B cell (primary cell): ENCODE measurements at regions of chr15 and their contacts with region 1.

Region 1: DNA sequence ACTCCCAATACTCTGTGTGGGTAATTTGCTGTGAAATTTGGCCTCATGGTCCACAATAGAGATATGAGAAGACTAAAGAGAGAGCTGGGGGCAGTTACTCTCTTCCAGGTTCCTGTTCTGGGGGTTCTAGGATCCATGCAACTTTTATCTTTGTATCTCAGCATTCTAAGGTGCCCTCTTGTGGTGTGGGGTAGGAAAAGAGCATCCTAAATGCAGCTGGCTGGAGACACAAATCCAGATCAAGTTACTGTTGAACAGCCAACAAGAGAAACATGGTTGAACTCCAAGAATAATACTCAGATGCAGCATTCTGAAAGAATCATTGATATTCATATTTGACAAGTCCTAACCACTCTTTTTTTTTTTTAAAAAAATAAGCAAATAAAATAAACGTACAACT is 238.2 kb downstream of the GREM1 start:
- DNase-seq: peak; percentile 52
- ATAC-seq: peak; percentile 28
- H3K4me3 ChIP-seq: no peak overlapping the region
- H3K4me3 Mint-ChIP-seq: no peak overlapping the region
- H3K27ac ChIP-seq: no peak overlapping the region
- H3K27ac Mint-ChIP-seq: no peak overlapping the region
- H3K4me1 ChIP-seq: no peaks in the 10 kb centered on the region
- H3K4me1 Mint-ChIP-seq: peaks cover 2% of the 10 kb centered on the region
- H3K27me3 ChIP-seq: peaks cover 0 to 3% (median 0%) of the 10 kb centered on the region in 4 experiments
- H3K27me3 Mint-ChIP-seq: peaks cover 24% of the 10 kb centered on the region
- CTCF ChIP-seq: peak; percentile 62

Region 2: GRCh38 chr15:32657198-32657883 is 298.7 kb before region 1 on chr15:
- CTCF ChIA-PET with region 1: interaction called, 67 read pairs
- POLR2A ChIA-PET with region 1: no interaction called
- intact Hi-C with region 1: loop called (anchors 1 kb)
- DNase-seq: no peak
- ATAC-seq: no peak
- H3K4me3 ChIP-seq: no peak overlapping the region
- H3K4me3 Mint-ChIP-seq: no peak overlapping the region
- H3K27ac ChIP-seq: no peak overlapping the region
- H3K27ac Mint-ChIP-seq: no peak overlapping the region
- H3K4me1 ChIP-seq: no peaks in the 10 kb centered on the region
- H3K4me1 Mint-ChIP-seq: peaks cover 3% of the 10 kb centered on the region
- H3K27me3 ChIP-seq: no peaks in the 10 kb centered on the region
- H3K27me3 Mint-ChIP-seq: no peaks in the 10 kb centered on the region
- CTCF ChIP-seq: no peak

Region 3: GRCh38 chr15:32878869-32879805 is 76.9 kb before region 1 on chr15:
- CTCF ChIA-PET with region 1: interaction called, 12 read pairs
- POLR2A ChIA-PET with region 1: no interaction called
- intact Hi-C with region 1: no loop called
- DNase-seq: no peak
- ATAC-seq: no peak
- H3K4me3 ChIP-seq: no peak overlapping the region
- H3K4me3 Mint-ChIP-seq: no peak overlapping the region
- H3K27ac ChIP-seq: no peak overlapping the region
- H3K27ac Mint-ChIP-seq: no peak overlapping the region
- H3K4me1 ChIP-seq: no peaks in the 10 kb centered on the region
- H3K4me1 Mint-ChIP-seq: no peaks in the 10 kb centered on the region
- H3K27me3 ChIP-seq: no peaks in the 10 kb centered on the region
- H3K27me3 Mint-ChIP-seq: peaks cover 4% of the 10 kb centered on the region
- CTCF ChIP-seq: no peak

Region 4: GRCh38 chr15:32919749-32920414 is 36.1 kb before region 1 on chr15:
- CTCF ChIA-PET with region 1: interaction called, 3 read pairs
- POLR2A ChIA-PET with region 1: no interaction called
- intact Hi-C with region 1: loop called (anchors 5 kb)
- DNase-seq: peak; percentile 23
- ATAC-seq: peak; percentile 28
- H3K4me3 ChIP-seq: no peak overlapping the region
- H3K4me3 Mint-ChIP-seq: peak overlapping the region; percentile 2
- H3K27ac ChIP-seq: no peak overlapping the region
- H3K27ac Mint-ChIP-seq: no peak overlapping the region
- H3K4me1 ChIP-seq: peaks cover 11 to 13% of the 10 kb centered on the region in 2 donors
- H3K4me1 Mint-ChIP-seq: peaks cover 16% of the 10 kb centered on the region
- H3K27me3 ChIP-seq: no peaks in the 10 kb centered on the region
- H3K27me3 Mint-ChIP-seq: peaks cover 8% of the 10 kb centered on the region
- CTCF ChIP-seq: no peak

Region 5: DNA sequence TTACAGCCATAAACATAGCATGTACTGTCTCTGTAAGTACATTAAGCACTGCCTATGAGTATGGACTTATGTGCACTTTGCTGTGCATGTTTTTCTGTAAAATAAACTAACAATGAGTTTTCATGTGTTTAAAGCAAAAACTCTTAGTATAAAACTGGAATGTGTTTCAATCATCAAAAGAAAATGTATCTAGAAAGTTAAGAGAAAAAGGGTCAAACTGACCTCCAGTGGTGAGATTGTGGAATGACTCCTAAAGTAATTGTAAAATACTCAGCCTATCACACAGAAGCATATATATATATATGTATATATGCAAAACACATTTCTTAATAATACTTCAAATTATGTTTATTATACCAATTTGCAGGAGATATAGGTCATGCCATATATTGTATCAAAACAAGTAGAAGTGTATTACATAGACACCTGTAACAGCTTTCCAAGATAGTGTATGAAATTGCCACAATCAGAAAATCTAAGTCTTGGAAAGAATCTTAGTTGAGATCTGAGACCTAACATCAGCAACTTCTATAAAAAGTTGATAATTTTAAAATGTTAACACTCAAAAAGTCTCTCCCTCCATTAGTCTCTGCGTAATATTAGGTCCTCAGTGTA is 38.9 kb after region 1 on chr15:
- CTCF ChIA-PET with region 1: interaction called, 5 read pairs
- POLR2A ChIA-PET with region 1: no interaction called
- intact Hi-C with region 1: loop called (anchors 2 kb)
- DNase-seq: peak; percentile 49
- ATAC-seq: no peak
- H3K4me3 ChIP-seq: no peak overlapping the region
- H3K4me3 Mint-ChIP-seq: no peak overlapping the region
- H3K27ac ChIP-seq: no peak overlapping the region
- H3K27ac Mint-ChIP-seq: no peak overlapping the region
- H3K4me1 ChIP-seq: no peaks in the 10 kb centered on the region
- H3K4me1 Mint-ChIP-seq: no peaks in the 10 kb centered on the region
- H3K27me3 ChIP-seq: no peaks in the 10 kb centered on the region
- H3K27me3 Mint-ChIP-seq: peaks cover 24% of the 10 kb centered on the region
- CTCF ChIP-seq: peak; percentile 74

Region 6: DNA sequence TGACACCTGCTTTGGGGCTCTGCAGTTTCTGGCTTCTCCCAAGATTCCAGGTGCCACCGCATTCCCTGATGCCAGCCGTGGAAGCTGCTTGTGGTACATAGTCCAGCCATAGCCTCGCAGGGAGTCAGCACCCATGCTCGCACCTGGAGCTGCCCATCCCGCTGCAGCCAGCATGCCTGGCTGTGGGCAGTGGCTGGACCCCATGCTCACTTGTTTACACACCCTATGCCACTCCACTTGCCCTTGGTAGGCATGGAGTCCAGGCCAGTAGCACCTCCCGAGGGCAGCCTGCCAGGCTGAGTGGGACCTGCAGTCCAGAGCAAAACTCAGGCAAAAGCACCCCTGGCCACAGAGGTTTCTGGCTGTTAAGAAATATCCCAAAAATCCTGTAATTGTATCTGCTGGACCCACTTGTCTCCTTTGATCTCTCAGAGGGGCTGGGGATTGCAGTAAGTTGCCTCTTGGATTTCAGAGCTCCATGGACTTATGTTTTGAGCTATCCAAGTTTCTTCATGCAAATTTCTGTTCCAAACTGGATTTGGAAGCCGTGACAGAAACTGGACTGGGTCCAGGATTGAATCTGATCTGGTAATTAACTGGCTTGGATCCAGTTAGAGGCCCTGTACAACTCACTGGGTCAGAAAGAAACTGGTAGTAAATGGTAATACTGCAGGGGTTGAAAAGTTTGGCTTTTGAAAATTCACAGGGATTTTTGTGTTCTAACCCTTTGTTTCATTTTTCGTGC is 89.2 kb after region 1 on chr15:
- CTCF ChIA-PET with region 1: no interaction called
- POLR2A ChIA-PET with region 1: no interaction called
- intact Hi-C with region 1: no loop called
- DNase-seq: no peak
- ATAC-seq: no peak
- H3K4me3 ChIP-seq: no peak overlapping the region
- H3K4me3 Mint-ChIP-seq: no peak overlapping the region
- H3K27ac ChIP-seq: no peak overlapping the region
- H3K27ac Mint-ChIP-seq: no peak overlapping the region
- H3K4me1 ChIP-seq: no peaks in the 10 kb centered on the region
- H3K4me1 Mint-ChIP-seq: no peaks in the 10 kb centered on the region
- H3K27me3 ChIP-seq: no peaks in the 10 kb centered on the region
- H3K27me3 Mint-ChIP-seq: peaks cover 4% of the 10 kb centered on the region
- CTCF ChIP-seq: no peak